ENCODE measurements at regions of chr16 and their contacts with region 1.

Region 1: GRCh38 chr16:82671741-82672140 is 45.0 kb downstream of the CDH13 start:
- DNase-seq: peak; percentile 63
- ATAC-seq: no peak
- H3K4me3 Mint-ChIP-seq: no peak overlapping the region
- H3K27ac Mint-ChIP-seq: no peak overlapping the region
- H3K4me1 Mint-ChIP-seq: no peaks in the 10 kb centered on the region
- H3K27me3 Mint-ChIP-seq: peaks cover 2% of the 10 kb centered on the region

Region 2: DNA sequence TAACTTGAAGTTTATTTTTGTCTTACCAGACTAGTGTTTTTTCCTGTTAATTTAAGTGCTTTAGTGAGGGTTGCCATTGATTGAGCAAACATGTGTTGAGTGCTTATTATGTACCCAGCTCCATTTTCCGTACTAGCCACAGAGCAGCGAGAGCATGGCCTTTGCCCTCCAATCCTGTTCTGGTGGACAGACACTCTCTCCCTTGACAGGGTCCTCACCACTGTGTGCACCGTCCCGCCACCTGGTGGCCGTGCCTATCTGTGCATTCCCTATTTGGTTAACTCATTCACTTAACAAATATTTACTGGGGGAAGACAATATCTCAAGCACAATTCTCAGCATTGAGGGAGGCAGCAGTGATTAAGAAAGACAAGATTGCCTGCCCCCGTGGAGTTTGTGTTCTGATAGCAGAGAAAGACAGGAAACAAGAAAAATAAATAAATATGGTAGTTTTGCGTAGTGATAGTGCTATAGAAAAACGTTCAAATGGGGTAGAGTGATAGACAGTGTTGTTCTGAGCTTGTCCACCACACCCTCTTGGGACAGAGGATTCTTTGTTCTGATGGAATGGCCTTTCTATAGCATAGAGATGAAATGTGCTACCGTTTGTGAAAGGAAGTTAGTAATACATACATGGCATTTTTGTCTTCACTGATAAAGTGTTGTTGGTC is 31.9 kb before region 1 on chr16:
- CTCF ChIA-PET with region 1: interaction called, 7 read pairs
- POLR2A ChIA-PET with region 1: no interaction called
- intact Hi-C with region 1: loop called (anchors 2 kb)
- DNase-seq: peak; percentile 78
- ATAC-seq: peak; percentile 47
- H3K4me3 Mint-ChIP-seq: no peak overlapping the region
- H3K27ac Mint-ChIP-seq: no peak overlapping the region
- H3K4me1 Mint-ChIP-seq: peaks cover 15% of the 10 kb centered on the region
- H3K27me3 Mint-ChIP-seq: peaks cover 5% of the 10 kb centered on the region